ENCODE measurements at regions of chr3 and their contacts with region 1.

Region 1: GRCh38 chr3:40464339-40465110 is 7.4 kb downstream of the RPL14 start:
- DNase-seq: no peak
- ATAC-seq: no peak
- H3K4me3 ChIP-seq: no peak overlapping the region
- H3K27ac ChIP-seq: no peak overlapping the region
- H3K4me1 ChIP-seq: no peaks in the 10 kb centered on the region
- H3K27me3 ChIP-seq: no peaks in the 10 kb centered on the region
- CTCF ChIP-seq: no peak

Region 2: DNA sequence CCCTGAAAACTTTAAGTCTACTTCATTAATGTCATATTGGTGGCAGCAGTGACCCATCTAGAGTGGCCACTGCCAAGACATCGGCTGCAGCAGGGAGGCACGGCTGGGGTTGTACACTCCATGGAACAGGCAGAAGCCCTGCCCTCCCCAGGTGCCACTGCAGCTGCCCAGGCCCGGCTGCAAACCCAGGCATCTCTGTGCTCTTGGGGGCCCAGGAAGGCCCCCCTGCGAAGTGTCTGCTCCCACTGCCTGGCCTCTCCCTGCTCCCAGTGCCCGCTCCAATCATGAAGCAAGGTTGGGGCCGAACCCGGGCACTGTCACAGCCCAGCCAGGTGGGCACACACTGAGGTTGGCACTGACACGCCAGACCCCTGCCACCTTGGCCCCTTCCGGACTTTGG is 19.5 kb before region 1 on chr3:
- intact Hi-C with region 1: loop called in 1 of 2 experiments (anchors 1 kb)
- DNase-seq: no peak
- ATAC-seq: no peak
- H3K4me3 ChIP-seq: no peak overlapping the region
- H3K27ac ChIP-seq: no peak overlapping the region
- H3K4me1 ChIP-seq: no peaks in the 10 kb centered on the region
- H3K27me3 ChIP-seq: no peaks in the 10 kb centered on the region
- CTCF ChIP-seq: no peak

Region 3: DNA sequence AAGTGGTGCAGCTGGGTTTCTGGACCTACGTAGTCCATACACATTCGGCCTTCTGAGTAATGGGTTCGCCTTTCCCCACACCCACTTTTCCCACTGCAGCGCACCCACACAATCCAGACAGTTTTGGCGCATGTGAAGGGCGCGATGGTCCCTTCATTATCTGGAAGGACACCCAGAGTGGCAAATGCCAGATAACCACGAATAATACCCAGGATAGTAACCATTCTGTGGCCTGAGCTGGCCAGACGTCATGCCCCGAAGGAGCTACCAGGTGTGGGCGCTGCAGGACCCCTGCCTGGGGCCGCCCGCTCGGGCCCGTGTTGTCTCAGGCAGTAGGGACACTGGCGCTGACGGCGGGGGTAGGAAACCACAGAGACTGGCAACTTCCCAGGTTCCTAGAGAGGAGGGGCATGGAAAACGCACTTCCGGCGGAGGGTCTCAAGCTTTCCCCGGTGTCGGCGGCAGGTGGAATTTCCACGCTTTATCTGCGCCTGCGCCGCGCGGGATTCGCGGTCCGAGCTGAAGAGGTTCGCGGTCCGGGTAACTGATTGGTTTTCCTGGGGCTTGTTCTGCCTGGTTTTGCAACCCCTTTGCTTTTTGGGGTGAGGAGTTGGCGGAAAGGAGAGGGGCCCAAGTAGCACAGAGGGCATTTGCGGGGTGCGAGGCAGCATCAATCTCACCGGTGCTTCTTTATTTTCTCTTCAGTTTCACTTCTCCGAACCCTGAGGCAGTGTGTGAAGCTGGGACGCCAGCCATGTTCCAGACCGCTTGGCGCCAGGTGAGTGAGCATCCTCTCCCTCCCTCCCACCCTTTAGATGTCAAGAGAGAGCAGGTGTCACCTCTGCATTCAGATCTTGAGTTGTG is 41.3 kb after region 1 on chr3 and contains the start of gene ZNF620:
- intact Hi-C with region 1: loop called in 1 of 2 experiments (anchors 5 kb)
- DNase-seq: peak; percentile 75 to 86
- ATAC-seq: peak; percentile 88 to 96 (median 94)
- H3K4me3 ChIP-seq: peak within 1 kb of the TSS; percentile 79
- H3K27ac ChIP-seq: peak within 1 kb of the TSS; percentile 84
- H3K4me1 ChIP-seq: peaks cover 16% of the 10 kb centered on the region
- H3K27me3 ChIP-seq: no peaks in the 10 kb centered on the region
- CTCF ChIP-seq: peak; percentile 28
- total RNA-seq, gene ZNF620: 1.3 to 2.2 (median 2.1) TPM

Region 4: GRCh38 chr3:40557575-40558161 is 93.1 kb after region 1 on chr3:
- intact Hi-C with region 1: no loop called
- DNase-seq: no peak
- ATAC-seq: no peak
- H3K4me3 ChIP-seq: no peak overlapping the region
- H3K27ac ChIP-seq: no peak overlapping the region
- H3K4me1 ChIP-seq: no peaks in the 10 kb centered on the region
- H3K27me3 ChIP-seq: no peaks in the 10 kb centered on the region
- CTCF ChIP-seq: no peak

Region 5: DNA sequence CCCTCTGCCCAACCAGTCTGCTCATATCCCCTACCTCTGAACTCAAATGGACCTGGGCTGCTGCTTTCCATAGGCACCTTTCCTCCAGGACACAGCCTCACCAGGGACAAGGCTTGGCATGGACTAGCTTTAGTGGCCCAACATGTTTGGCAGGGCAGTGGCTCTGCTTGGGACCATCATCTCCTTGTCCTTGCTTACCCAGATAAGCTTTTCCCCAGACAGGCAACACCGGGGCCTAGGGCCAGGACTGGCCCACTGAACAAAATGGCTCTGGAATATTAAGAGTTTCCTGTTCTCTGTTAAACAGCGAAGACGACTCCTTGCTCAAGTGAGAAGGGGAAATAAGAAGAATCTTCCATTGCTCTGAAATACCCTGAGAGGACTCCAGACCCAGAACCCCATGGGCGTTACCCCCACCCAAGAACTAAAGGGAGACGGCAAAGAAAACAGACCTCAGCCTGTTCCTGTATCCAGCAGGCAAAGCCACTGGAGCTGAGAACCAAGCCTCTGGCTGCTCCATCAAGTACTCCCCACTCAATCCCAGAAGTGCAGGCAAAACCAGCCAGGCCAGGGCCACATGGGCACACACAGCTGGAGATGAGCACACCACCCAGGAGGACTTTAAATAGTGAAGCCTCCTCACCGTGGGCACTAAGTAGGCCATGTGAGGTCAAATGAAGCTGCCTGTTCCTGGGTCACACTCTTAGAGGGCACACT is 780.3 kb after region 1 on chr3:
- intact Hi-C with region 1: no loop called
- DNase-seq: no peak
- ATAC-seq: peak in 2 of 4 donors; percentile 44 to 47
- H3K4me3 ChIP-seq: no peak overlapping the region
- H3K27ac ChIP-seq: no peak overlapping the region
- H3K4me1 ChIP-seq: no peaks in the 10 kb centered on the region
- H3K27me3 ChIP-seq: no peaks in the 10 kb centered on the region
- CTCF ChIP-seq: no peak